Activated CD4-positive, alpha-beta T cell treated with anti-CD3 and anti-CD28 coated beads, Interleukin-2, amount 10 ng/mL, durations not matched to agents 24 days and 14 days (primary cell): ENCODE measurements at regions of chr1 and their contacts with region 1.

Region 1: GRCh38 chr1:76240316-76240715 is 165.8 kb downstream of the ST6GALNAC3 start:
- DNase-seq: no peak
- H3K4me3 Mint-ChIP-seq: no peak overlapping the region
- H3K27ac Mint-ChIP-seq: no peak overlapping the region
- H3K4me1 Mint-ChIP-seq: no peaks in the 10 kb centered on the region
- H3K27me3 Mint-ChIP-seq: no peaks in the 10 kb centered on the region

Region 2: GRCh38 chr1:76379506-76379905 is 139.2 kb after region 1 on chr1:
- intact Hi-C with region 1: loop called (anchors 5 kb)
- DNase-seq: no peak
- H3K4me3 Mint-ChIP-seq: no peak overlapping the region
- H3K27ac Mint-ChIP-seq: no peak overlapping the region
- H3K4me1 Mint-ChIP-seq: no peaks in the 10 kb centered on the region
- H3K27me3 Mint-ChIP-seq: no peaks in the 10 kb centered on the region